ENCODE measurements at regions of chr17 and their contacts with region 1.

Region 1: GRCh38 chr17:56819431-56820145 is 14.1 kb downstream of the C17orf67 start:
- DNase-seq: peak; percentile 46 to 78 (median 58)
- H3K4me3 ChIP-seq: no peak overlapping the region
- H3K4me3 Mint-ChIP-seq: no peak overlapping the region
- H3K27ac ChIP-seq: no peak overlapping the region
- H3K27ac Mint-ChIP-seq: peak overlapping the region in 1 of 8 donors; percentile 19
- H3K4me1 ChIP-seq: no peaks in the 10 kb centered on the region
- H3K4me1 Mint-ChIP-seq: peaks cover 5 to 6% (median 5%) of the 10 kb centered on the region in 3 donors
- H3K27me3 ChIP-seq: no peaks in the 10 kb centered on the region
- H3K27me3 Mint-ChIP-seq: no peaks in the 10 kb centered on the region

Region 2: GRCh38 chr17:56939901-56940343 is 120.3 kb after region 1 on chr17:
- CTCF ChIA-PET with region 1: interaction called, 36 read pairs
- POLR2A ChIA-PET with region 1: no interaction called
- DNase-seq: peak in 2 of 5 donors; percentile 30 to 53
- H3K4me3 ChIP-seq: no peak overlapping the region
- H3K4me3 Mint-ChIP-seq: no peak overlapping the region
- H3K27ac ChIP-seq: no peak overlapping the region
- H3K27ac Mint-ChIP-seq: peak overlapping the region in 3 of 8 donors; percentile 14 to 79 (median 28)
- H3K4me1 ChIP-seq: no peaks in the 10 kb centered on the region
- H3K4me1 Mint-ChIP-seq: no peaks in the 10 kb centered on the region
- H3K27me3 ChIP-seq: no peaks in the 10 kb centered on the region
- H3K27me3 Mint-ChIP-seq: no peaks in the 10 kb centered on the region

Region 3: DNA sequence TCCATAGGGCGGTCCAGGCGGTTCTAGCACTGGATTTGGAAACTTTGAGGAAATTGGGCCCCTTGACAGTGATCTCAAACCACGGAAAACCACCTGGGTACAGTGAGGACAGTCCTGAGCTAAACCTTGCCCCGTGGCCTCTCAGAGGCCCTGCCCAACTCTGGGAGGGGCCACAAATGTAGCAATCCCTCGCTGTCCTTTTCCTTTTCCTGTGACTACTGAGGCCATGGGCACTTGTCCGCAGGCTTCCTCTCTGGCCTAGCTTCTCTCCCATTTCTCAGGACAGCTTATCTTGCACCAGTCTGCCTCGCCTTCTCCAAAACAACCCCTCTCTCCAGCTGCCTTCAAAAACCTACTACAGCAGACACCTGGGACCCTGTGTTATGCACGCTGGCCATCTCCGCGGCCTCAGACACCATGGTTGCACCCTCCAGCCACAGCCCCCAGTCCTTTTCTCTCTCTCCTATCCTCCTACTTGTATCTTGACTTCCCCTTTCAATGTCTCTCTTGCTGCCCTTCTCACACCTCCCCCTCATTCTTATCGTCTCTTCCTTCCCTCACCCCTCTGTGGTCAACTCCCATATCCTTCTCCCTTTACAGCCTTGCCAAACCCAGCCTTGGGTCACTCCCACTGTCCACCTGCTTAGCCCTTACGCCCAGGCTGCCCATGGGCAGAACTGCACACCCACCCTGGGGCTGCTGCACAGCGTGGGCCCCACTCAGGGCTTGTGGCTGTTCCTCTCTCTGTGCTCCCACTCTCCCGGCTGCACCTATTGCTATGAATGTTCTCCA is 166.0 kb after region 1 on chr17:
- CTCF ChIA-PET with region 1: no interaction called
- POLR2A ChIA-PET with region 1: no interaction called
- DNase-seq: no peak
- H3K4me3 ChIP-seq: no peak overlapping the region
- H3K4me3 Mint-ChIP-seq: peak overlapping the region in 1 of 7 donors; percentile 75
- H3K27ac ChIP-seq: peak overlapping the region; percentile 43
- H3K27ac Mint-ChIP-seq: peak overlapping the region in 1 of 8 donors; percentile 83
- H3K4me1 ChIP-seq: no peaks in the 10 kb centered on the region
- H3K4me1 Mint-ChIP-seq: peaks cover 0 to 3% (median 0%) of the 10 kb centered on the region in 3 donors
- H3K27me3 ChIP-seq: no peaks in the 10 kb centered on the region
- H3K27me3 Mint-ChIP-seq: peaks cover 0 to 1% of the 10 kb centered on the region in 2 donors